ENCODE measurements at regions of chr7 and their contacts with region 1.

Region 1: DNA sequence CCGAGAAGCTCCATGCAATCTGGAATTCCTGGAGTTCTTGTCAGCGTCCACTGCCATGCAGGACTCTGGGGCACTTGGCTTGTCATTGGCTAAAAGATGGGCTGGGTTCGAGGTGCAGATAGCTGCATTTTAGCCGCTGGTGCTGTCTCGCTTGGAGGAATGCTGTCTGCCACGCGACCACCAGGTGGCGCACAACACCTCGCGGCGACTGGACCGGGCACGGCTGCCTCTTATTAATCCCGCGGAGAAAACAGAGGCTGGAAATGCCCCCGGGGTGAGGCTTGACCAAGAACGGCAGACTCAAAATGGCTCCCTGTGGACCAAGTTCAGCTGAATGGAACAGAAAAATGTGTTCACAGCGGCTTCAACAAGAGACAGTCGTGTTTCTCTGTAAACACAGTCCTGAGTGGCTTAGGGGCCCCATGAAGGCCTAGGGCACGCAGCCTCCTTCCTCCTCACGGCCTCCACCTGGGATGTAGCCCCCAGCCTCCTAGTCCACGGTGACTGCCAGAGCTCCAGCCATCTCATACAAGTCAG is 46.2 kb downstream of the AOC1 start:
- DNase-seq: peak; percentile 82
- H3K4me3 Mint-ChIP-seq: no peak overlapping the region
- H3K27ac Mint-ChIP-seq: no peak overlapping the region
- H3K4me1 Mint-ChIP-seq: peaks cover 3% of the 10 kb centered on the region
- H3K27me3 Mint-ChIP-seq: peaks cover 76% of the 10 kb centered on the region

Region 2: DNA sequence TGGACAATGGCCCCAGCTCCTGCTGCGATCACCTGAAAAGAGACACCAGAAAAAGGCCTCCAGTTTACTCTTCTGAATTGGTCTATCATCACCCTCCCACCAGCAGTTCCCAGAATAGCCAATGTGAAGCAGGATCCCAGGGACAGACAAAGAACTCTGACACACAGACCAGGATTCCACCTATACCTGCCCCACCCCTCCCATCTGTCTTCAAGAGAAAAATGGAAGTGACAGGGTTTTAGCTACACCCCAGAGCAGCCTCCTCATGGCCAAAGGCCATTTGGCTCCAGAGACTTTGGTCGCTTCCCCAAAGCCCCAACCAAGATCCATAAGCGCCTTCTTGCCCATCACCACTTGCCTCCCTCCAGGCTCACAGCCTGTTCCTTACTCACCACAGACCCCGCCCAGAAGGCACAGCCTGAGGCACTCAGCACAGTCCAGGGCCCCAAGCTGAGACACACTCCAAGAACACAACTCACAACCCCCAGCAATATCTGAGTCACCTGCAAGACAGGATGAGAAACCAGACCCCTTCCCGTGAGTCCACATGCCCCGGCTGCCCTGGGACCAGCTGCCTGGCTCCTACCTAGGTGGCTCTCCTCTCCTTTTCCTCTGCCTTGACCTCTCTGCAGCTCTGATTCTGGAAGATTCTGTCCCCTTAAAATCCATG is 104.8 kb before region 1 on chr7:
- CTCF ChIA-PET with region 1: no interaction called
- DNase-seq: no peak
- H3K4me3 Mint-ChIP-seq: no peak overlapping the region
- H3K27ac Mint-ChIP-seq: no peak overlapping the region
- H3K4me1 Mint-ChIP-seq: no peaks in the 10 kb centered on the region
- H3K27me3 Mint-ChIP-seq: peaks cover 21% of the 10 kb centered on the region

Region 3: GRCh38 chr7:150909200-150909995 is 10.9 kb after region 1 on chr7:
- CTCF ChIA-PET with region 1: interaction called, 15 read pairs
- DNase-seq: peak; percentile 75
- H3K4me3 Mint-ChIP-seq: peak overlapping the region; percentile 37
- H3K27ac Mint-ChIP-seq: peak overlapping the region; percentile 43
- H3K4me1 Mint-ChIP-seq: peaks cover 9% of the 10 kb centered on the region
- H3K27me3 Mint-ChIP-seq: peaks cover 61% of the 10 kb centered on the region

Region 4: GRCh38 chr7:150962553-150963399 is 64.2 kb after region 1 on chr7:
- CTCF ChIA-PET with region 1: interaction called, 12 read pairs
- DNase-seq: peak; percentile 77
- H3K4me3 Mint-ChIP-seq: no peak overlapping the region
- H3K27ac Mint-ChIP-seq: no peak overlapping the region
- H3K4me1 Mint-ChIP-seq: peaks cover 18% of the 10 kb centered on the region
- H3K27me3 Mint-ChIP-seq: peaks cover 72% of the 10 kb centered on the region

Region 5: GRCh38 chr7:150988230-150989226 is 90.0 kb after region 1 on chr7:
- CTCF ChIA-PET with region 1: interaction called, 42 read pairs
- DNase-seq: peak; percentile 81
- H3K4me3 Mint-ChIP-seq: peak overlapping the region; percentile 54
- H3K27ac Mint-ChIP-seq: no peak overlapping the region
- H3K4me1 Mint-ChIP-seq: peaks cover 45% of the 10 kb centered on the region
- H3K27me3 Mint-ChIP-seq: peaks cover 66% of the 10 kb centered on the region

Region 6: DNA sequence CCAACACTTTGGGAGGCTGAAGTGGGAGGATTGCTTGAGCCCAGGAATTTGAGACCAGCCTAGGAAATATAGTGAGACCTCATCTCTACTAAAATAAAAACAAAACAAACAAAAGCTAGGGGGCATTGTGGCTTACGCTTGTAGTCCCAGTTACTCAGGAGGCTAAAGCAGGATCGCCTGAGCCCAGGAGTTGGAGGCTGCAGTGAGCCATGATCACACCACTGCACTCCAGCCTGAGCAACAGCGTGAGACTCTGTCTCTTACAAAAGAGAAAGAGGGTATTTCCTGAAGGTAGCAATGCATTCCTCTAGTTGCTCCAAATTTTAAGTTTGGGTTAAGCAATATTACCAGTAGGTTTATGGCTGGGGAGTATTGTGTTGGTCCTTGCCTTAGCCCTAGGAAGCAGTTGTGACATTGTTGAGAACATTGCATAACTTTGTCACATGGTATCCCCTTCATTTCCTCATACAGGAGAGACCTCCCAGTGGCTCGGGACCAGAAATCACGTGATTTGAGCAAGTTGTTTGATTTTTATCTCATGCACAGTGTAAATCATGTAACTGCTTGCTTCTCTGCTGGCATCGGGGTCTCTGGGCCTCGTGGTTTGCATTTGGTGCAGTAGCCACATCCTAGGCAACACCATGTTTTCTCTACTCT is 373.3 kb after region 1 on chr7:
- CTCF ChIA-PET with region 1: no interaction called
- DNase-seq: no peak
- H3K4me3 Mint-ChIP-seq: no peak overlapping the region
- H3K27ac Mint-ChIP-seq: no peak overlapping the region
- H3K4me1 Mint-ChIP-seq: peaks cover 23% of the 10 kb centered on the region
- H3K27me3 Mint-ChIP-seq: peaks cover 39% of the 10 kb centered on the region